Mammary epithelial cell (primary cell): ENCODE measurements at regions of chr2 and their contacts with region 1.

Region 1: DNA sequence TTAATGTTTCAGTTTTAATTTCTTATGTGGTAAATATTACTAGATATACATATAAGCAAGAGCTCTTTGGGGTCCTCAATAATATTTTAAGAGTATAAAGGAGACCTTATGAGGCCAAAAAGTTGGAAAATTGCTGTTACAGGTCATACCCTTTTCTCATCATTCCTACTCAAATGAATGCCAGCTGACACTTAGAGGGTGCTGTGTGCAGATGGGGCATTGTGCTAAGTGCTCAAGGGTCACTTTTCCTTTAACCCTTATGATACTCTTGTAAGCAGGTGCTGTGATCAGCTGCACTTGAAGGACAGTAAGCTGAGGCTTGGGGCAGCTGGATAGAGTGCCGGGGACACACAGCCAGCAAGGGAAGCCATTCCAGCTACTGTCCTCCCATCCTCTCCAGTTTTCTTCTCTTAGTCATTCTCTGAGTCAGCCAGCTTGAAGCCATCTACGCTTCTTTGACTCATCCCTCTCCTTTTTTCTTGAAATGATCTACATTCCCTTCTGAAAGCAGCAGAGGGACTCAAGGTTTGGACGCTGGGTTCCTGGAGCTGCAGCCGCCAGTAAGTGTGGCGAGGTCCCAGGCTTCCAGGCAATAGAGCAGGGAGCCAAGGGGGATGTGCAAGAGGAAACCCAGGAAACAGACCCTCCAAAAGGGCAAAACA is 42.0 kb upstream of the CREB1 start:
- DNase-seq: peak; percentile 82
- H3K4me3 ChIP-seq: no peak overlapping the region
- H3K27ac ChIP-seq: no peak overlapping the region
- H3K4me1 ChIP-seq: peaks cover 16% of the 10 kb centered on the region
- H3K27me3 ChIP-seq: no peaks in the 10 kb centered on the region
- CTCF ChIP-seq: peak; percentile 28 to 43

Region 2: GRCh38 chr2:207565736-207566500 is 78.1 kb after region 1 on chr2:
- CTCF ChIA-PET with region 1: no interaction called
- dilution Hi-C with region 1: no loop called
- in situ Hi-C with region 1: no loop called
- intact Hi-C with region 1: loop called (anchors 5 kb)
- DNase-seq: no peak
- H3K4me3 ChIP-seq: no peak overlapping the region
- H3K27ac ChIP-seq: no peak overlapping the region
- H3K4me1 ChIP-seq: no peaks in the 10 kb centered on the region
- H3K27me3 ChIP-seq: no peaks in the 10 kb centered on the region
- CTCF ChIP-seq: no peak

Region 3: DNA sequence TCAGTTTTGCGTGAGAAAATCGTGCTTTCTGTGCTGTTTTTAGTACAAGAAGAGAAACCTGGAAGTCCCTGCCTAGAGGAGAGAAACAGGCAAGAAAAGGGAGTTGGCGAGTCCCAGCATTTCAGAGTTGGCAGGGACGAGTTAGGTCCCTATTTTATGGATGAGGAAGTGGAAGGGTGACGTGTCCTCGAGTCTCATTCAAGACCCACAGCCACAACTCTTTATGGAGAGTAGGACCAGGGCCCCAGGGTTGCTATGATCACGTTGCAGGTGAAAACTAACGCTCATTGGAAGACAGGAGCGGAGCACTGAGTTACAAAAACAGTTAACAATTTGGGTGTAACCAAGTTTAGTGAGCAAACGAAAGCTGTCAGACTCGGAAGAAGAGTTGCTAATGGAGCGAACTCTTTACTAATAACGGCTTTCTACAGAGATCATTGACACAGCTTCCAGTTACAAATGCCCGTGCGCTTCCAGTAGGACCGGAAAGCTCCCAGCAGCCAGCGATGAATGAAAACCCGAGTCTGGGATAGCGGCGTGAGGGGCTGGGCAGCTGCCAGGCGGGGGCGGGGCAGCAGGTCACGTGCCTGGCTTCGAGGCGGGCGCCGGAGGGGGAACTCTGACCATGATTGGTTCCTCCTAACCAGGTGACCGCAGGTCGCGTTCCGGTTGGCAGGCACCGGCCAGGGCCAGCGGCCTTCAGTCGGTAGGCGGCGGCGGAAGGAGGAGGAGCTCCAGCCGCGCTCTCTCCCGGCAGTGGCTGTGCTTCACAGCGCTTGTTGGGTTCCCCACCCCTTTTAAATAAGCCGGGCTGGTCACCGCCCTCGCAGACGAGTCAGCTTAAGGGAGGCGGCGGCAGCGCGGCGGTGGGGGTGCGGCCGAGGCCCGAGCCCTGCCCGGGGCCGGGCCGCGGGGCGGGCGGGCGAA is 223.3 kb after region 1 on chr2 and contains the start of gene CCNYL1:
- CTCF ChIA-PET with region 1: interaction called, 10 read pairs
- dilution Hi-C with region 1: no loop called
- in situ Hi-C with region 1: no loop called
- intact Hi-C with region 1: loop called (anchors 10 kb)
- DNase-seq: peak; percentile 99
- H3K4me3 ChIP-seq: peak within 1 kb of the TSS; percentile 88 to 93 (median 91)
- H3K27ac ChIP-seq: peak within 1 kb of the TSS; percentile 73
- H3K4me1 ChIP-seq: peaks cover 27% of the 10 kb centered on the region
- H3K27me3 ChIP-seq: no peaks in the 10 kb centered on the region
- CTCF ChIP-seq: peak in 1 of 2 donors; percentile 13
- total RNA-seq, gene CCNYL1: 11.2 to 30.0 TPM